Breast epithelium (tissue), 4 donors: ENCODE measurements at regions of chr4 and their contacts with region 1.

Region 1: DNA sequence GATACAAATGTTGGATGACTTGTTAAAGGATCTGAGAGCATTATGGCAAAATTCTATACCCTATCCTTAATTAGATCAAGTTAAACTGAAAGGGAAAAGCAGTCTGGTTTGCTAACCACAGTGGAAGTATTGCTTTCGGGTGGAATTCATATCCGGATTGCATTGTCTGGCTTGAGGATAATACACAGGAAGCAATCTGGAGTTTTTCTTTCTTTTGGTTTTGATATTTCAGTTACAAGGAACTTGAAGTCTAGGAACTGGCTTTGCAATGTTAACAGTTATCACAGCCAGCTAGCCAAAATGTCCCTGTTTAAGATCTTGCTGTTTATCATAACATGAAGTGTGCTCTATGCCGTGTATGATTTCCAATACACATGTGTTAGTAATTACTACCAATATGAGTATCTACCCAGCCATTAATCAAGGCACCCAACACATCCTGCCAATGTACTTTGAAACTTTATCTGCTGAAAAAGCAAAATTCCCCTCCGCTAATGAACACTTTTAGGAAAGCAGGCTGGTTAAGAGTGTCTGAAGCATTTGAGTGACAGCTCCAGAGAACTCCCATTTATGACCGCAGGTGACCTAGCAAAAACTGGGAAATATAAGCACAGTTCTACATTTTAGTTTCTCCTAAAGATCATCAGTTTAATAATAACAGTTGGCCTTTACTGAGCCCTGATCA is 146.4 kb downstream of the PALLD start:
- DNase-seq: no peak
- H3K4me3 ChIP-seq: peak overlapping the region in 1 of 3 donors; percentile 10
- H3K27ac ChIP-seq: peak overlapping the region; percentile 5 to 52
- H3K4me1 ChIP-seq: no peaks in the 10 kb centered on the region
- H3K27me3 ChIP-seq: no peaks in the 10 kb centered on the region
- CTCF ChIP-seq: no peak
- POLR2A ChIP-seq: no peak

Region 2: DNA sequence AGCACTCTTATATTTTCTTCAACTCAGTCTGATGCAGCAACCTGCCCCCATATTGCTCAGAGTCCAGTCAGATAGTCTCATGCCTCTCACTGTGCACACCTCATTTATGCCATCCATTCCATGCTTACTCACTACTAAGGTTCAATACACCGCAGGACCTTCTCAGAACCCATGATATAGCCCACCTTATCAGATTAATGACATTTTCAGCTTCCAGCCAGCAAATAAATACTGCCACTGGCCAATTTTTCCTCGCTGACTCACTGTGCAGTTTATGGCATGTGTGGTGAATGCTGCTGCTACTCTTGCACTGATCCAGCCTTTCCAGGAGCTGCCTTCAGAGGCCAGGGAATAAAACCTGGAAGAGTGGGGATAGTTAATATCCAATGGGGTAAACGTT is 1028.4 kb before region 1 on chr4:
- intact Hi-C with region 1: no loop called
- DNase-seq: no peak
- H3K4me3 ChIP-seq: no peak overlapping the region
- H3K27ac ChIP-seq: no peak overlapping the region
- H3K4me1 ChIP-seq: no peaks in the 10 kb centered on the region
- H3K27me3 ChIP-seq: no peaks in the 10 kb centered on the region
- CTCF ChIP-seq: no peak
- POLR2A ChIP-seq: no peak

Region 3: GRCh38 chr4:168574581-168575295 is 68.5 kb before region 1 on chr4:
- intact Hi-C with region 1: no loop called
- DNase-seq: no peak
- H3K4me3 ChIP-seq: no peak overlapping the region
- H3K27ac ChIP-seq: no peak overlapping the region
- H3K4me1 ChIP-seq: no peaks in the 10 kb centered on the region
- H3K27me3 ChIP-seq: no peaks in the 10 kb centered on the region
- CTCF ChIP-seq: no peak
- POLR2A ChIP-seq: no peak

Region 4: GRCh38 chr4:168618577-168619265 is 24.5 kb before region 1 on chr4:
- intact Hi-C with region 1: loop called (anchors 1 kb)
- DNase-seq: no peak
- H3K4me3 ChIP-seq: no peak overlapping the region
- H3K27ac ChIP-seq: no peak overlapping the region
- H3K4me1 ChIP-seq: no peaks in the 10 kb centered on the region
- H3K27me3 ChIP-seq: no peaks in the 10 kb centered on the region
- CTCF ChIP-seq: no peak
- POLR2A ChIP-seq: no peak